ENCODE measurements at regions of chr19 and their contacts with region 1.

Region 1: DNA sequence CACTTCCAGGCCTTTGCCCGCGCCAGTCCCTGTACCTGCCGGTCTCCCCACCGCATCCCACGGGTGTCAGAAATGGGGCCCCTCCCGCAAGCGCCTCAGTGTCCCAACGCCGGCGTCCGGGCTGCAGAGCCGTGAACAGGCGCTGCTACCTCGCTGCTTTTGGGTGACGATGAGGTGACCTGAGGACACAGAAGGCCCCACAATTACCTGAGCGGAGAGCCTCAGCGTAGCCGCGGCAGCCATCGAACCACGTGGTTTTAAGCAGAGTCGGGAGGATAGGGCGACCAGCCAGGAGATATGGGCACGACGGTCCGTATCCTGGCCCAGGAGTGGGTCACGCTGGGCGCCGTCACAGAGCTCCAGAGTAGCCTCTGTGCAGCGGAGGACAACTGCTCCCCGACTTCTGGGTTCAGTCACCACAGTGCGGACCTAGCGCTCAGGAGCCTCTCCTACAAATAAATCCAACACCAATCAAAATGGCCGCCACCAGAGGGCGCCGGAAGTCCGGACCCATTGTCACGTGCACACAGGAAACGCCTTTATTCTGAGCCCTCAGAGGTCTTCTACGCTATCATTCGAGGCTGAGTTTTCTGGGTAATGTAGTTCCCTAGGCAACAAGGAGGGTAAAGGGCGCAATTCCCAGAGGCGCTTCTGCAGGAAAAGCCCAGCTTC is at the start of gene ZNF814:
- DNase-seq: peak; percentile 91
- ATAC-seq: peak; percentile 93
- H3K4me3 ChIP-seq: peak within 1 kb of the TSS; percentile 75 to 97 (median 85)
- H3K4me3 Mint-ChIP-seq: peak within 1 kb of the TSS; percentile 95
- H3K27ac ChIP-seq: peak within 1 kb of the TSS; percentile 76 to 86
- H3K27ac Mint-ChIP-seq: peak within 1 kb of the TSS; percentile 90
- H3K4me1 ChIP-seq: peaks cover 17 to 19% of the 10 kb centered on the region in 2 donors
- H3K4me1 Mint-ChIP-seq: peaks cover 31% of the 10 kb centered on the region
- H3K27me3 ChIP-seq: no peaks in the 10 kb centered on the region
- H3K27me3 Mint-ChIP-seq: no peaks in the 10 kb centered on the region
- CTCF ChIP-seq: peak; percentile 40
- total RNA-seq, gene ZNF814: 83.9 and 95.1 TPM in 2 replicates

Region 2: DNA sequence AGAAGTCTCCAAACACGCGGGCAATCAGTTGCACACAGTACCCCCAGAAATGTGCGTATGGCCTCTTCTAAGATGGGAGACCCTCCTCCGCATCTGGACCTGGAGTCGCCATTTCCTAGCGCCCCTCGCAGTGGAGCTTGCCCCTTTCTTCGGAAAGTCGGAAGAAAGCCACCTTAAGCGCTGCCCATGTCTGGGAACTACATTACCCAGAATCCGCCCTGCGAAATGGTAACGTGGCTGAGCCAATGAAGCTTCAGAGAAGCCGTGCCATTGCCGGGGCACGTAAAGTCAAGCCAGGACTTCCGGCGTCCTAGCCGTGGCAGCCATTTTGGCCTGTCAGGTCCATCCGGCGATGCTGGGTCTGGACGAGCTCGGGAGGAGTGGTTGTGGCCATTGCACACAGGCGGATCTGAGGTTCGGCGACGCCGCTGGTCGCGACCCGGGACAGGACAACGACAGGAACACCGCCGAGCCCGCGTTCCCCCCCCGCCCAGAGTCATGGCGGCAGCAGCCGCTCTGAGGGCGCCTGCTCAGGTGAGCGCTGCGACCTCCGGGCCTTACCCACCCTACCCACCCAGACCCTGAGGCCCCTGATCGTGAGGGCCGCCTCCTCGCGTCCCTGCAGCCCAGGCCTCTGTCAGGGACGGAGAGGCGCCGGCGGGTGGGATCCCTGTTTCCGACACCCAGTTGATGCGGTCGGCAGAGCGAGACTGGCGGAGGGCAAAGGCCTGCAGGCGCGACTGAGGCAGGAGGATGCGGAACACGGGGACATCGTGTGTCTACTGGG is 119.2 kb before region 1 on chr19 and contains the start of gene ZNF586:
- CTCF ChIA-PET with region 1: no interaction called
- POLR2A ChIA-PET with region 1: interaction called, 3 read pairs
- intact Hi-C with region 1: loop called (anchors 1 kb)
- DNase-seq: peak; percentile 91
- ATAC-seq: peak; percentile 99
- H3K4me3 ChIP-seq: peak within 1 kb of the TSS; percentile 65 to 86 (median 82)
- H3K4me3 Mint-ChIP-seq: peak within 1 kb of the TSS; percentile 94
- H3K27ac ChIP-seq: peak within 1 kb of the TSS; percentile 75 to 83
- H3K27ac Mint-ChIP-seq: peak within 1 kb of the TSS; percentile 90
- H3K4me1 ChIP-seq: peaks cover 23 to 49% of the 10 kb centered on the region in 2 donors
- H3K4me1 Mint-ChIP-seq: peaks cover 37% of the 10 kb centered on the region
- H3K27me3 ChIP-seq: no peaks in the 10 kb centered on the region
- H3K27me3 Mint-ChIP-seq: no peaks in the 10 kb centered on the region
- CTCF ChIP-seq: no peak
- total RNA-seq, gene ZNF586: 48.0 and 51.3 TPM in 2 replicates

Region 3: GRCh38 chr19:57850553-57851017 is 38.1 kb before region 1 on chr19:
- CTCF ChIA-PET with region 1: no interaction called
- POLR2A ChIA-PET with region 1: interaction called, 5 read pairs
- intact Hi-C with region 1: loop called (anchors 5 kb)
- DNase-seq: peak; percentile 19
- ATAC-seq: no peak
- H3K4me3 ChIP-seq: peak overlapping the region; percentile 26 to 95 (median 76)
- H3K4me3 Mint-ChIP-seq: peak overlapping the region; percentile 97
- H3K27ac ChIP-seq: peak overlapping the region in 1 of 2 donors; percentile 93
- H3K27ac Mint-ChIP-seq: peak overlapping the region; percentile 94
- H3K4me1 ChIP-seq: peaks cover 7 to 16% of the 10 kb centered on the region in 2 donors
- H3K4me1 Mint-ChIP-seq: peaks cover 22% of the 10 kb centered on the region
- H3K27me3 ChIP-seq: no peaks in the 10 kb centered on the region
- H3K27me3 Mint-ChIP-seq: no peaks in the 10 kb centered on the region
- CTCF ChIP-seq: no peak

Region 4: GRCh38 chr19:57914531-57914930 is 25.8 kb after region 1 on chr19:
- CTCF ChIA-PET with region 1: no interaction called
- POLR2A ChIA-PET with region 1: no interaction called
- intact Hi-C with region 1: loop called (anchors 1 kb)
- DNase-seq: no peak
- ATAC-seq: no peak
- H3K4me3 ChIP-seq: no peak overlapping the region
- H3K4me3 Mint-ChIP-seq: peak overlapping the region; percentile 96
- H3K27ac ChIP-seq: no peak overlapping the region
- H3K27ac Mint-ChIP-seq: peak overlapping the region; percentile 26
- H3K4me1 ChIP-seq: peaks cover 9 to 13% of the 10 kb centered on the region in 2 donors
- H3K4me1 Mint-ChIP-seq: peaks cover 40% of the 10 kb centered on the region
- H3K27me3 ChIP-seq: no peaks in the 10 kb centered on the region
- H3K27me3 Mint-ChIP-seq: no peaks in the 10 kb centered on the region
- CTCF ChIP-seq: no peak

Region 5: DNA sequence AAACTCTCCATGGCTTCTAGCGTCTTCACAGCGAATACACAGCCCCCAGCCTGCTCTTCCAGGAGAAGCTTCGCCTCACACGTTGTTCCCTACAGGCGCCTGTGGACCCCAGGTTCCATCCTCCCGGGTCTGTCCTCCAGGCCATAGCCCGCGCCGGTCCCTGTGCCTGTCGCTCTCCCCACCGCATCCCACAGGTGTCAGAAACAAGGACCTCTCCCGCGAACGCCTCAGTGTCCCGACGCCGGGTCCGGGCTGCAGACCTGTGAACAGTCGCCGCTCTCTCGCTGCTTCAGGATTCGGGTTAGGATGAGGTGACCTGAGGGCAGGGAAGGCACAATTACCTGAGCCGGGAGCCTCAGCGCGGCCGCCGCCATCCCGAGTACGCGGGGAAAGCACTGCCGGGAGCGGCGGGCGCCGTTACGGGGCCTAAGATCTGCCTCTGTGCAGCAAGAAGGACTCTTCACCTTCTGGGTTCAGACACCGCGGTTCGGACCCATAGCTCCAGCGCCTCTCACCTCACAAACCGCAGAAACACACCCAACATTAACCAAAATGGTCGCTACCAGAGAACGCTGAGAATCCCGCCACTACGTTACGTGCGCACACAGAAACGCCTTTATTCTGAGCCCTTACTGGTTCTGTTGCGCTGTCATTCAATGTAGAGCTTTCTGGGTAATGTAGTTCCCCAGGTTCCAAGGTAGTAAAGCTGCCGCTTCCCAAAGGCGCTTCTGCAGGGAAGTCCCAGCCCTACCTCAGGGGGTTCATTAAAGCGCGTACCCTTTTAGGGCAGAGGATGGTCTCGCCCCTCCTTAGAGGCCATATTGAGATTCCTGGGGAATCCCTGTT is 46.3 kb after region 1 on chr19 and contains the start of gene ZNF418:
- CTCF ChIA-PET with region 1: no interaction called
- POLR2A ChIA-PET with region 1: no interaction called
- intact Hi-C with region 1: loop called (anchors 1 kb)
- DNase-seq: peak; percentile 81
- ATAC-seq: peak; percentile 99
- H3K4me3 ChIP-seq: peak within 1 kb of the TSS; percentile 27 to 83 (median 77)
- H3K4me3 Mint-ChIP-seq: peak within 1 kb of the TSS; percentile 94
- H3K27ac ChIP-seq: peak within 1 kb of the TSS; percentile 74 to 87
- H3K27ac Mint-ChIP-seq: peak within 1 kb of the TSS; percentile 92
- H3K4me1 ChIP-seq: peaks cover 8 to 14% of the 10 kb centered on the region in 2 donors
- H3K4me1 Mint-ChIP-seq: peaks cover 17% of the 10 kb centered on the region
- H3K27me3 ChIP-seq: no peaks in the 10 kb centered on the region
- H3K27me3 Mint-ChIP-seq: no peaks in the 10 kb centered on the region
- CTCF ChIP-seq: no peak
- total RNA-seq, gene ZNF418: 35.8 and 38.9 TPM in 2 replicates

Measured in B cell (primary cell).